ENCODE measurements at regions of chr15 and their contacts with region 1.

Region 1: DNA sequence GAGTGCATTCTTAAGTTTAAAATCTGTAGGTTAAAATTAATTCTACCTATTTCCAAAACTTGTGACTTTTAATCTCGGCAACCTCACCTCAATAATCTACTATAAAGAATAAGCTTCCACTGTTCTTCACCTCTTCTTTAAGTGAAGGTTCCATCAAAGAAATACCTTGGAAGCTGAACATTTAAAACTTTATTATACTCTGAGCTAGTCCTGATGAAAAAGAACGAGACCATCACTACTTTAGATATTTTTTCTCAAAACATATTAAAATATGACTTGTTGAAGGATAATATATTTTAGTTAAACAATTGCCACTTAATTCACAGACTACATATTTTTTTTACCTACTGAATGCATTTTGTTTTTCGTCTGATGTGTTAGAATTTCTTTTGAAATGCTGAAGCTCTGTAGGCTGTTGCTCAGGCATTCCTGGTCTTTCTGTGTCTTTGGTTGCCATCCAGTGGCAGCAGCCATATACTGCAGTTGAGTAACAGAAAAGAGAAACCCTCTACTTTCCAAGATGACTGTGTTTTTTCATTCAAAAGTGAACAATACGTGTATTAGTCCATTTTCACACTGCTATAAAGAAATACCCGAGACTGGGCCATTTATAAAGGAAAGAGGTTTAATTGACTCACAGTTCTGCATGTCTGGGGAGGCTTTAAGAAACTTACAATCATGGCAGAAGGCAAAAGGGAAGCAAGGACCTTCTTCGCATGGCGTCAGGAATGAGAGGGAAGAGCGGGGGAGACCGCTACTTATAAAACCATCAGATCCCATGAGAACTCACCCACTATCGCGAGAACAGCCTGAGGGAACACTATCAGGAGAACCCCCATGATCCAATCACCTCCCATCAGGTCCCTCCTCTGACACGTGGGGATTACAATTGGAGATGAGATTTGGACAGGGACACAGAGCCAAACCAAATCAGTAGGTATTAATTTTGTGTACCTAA is 4.5 kb upstream of the GOLGA8B start:
- DNase-seq: peak in 1 of 2 experiments; percentile 44
- H3K4me3 ChIP-seq: no peak overlapping the region
- H3K27ac ChIP-seq: no peak overlapping the region
- H3K4me1 ChIP-seq: no peaks in the 10 kb centered on the region
- H3K27me3 ChIP-seq: no peaks in the 10 kb centered on the region
- CTCF ChIP-seq: peak; percentile 84

Region 2: GRCh38 chr15:33737687-33738601 is 850.1 kb before region 1 on chr15:
- CTCF ChIA-PET with region 1: no interaction called
- POLR2A ChIA-PET with region 1: no interaction called
- intact Hi-C with region 1: loop called (anchors 5 kb)
- DNase-seq: peak in 1 of 2 experiments; percentile 31
- H3K4me3 ChIP-seq: no peak overlapping the region
- H3K27ac ChIP-seq: no peak overlapping the region
- H3K4me1 ChIP-seq: no peaks in the 10 kb centered on the region
- H3K27me3 ChIP-seq: no peaks in the 10 kb centered on the region
- CTCF ChIP-seq: peak; percentile 84

Region 3: DNA sequence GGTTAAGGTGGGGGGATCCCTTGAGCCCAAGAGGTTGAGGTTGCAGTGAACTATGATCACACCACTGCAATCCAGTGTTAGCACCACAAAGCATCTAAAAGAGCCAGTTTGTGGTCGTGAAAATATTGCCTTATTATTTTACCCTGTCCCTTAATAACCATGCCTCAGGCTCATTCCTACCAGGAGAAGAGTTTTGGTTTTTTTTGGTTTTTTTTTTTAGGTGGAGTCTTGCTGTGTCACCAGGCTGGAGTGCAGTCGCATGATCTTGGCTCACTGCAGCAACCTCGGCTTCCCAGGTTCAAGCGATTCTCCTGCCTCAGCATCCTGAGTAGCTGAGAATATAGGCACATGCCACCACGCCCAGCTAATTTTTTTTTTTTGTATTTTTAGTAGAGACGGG is 531.1 kb before region 1 on chr15:
- CTCF ChIA-PET with region 1: interaction called, 7 read pairs
- POLR2A ChIA-PET with region 1: interaction called, 4 read pairs
- intact Hi-C with region 1: loop called (anchors 1 kb)
- DNase-seq: no peak
- H3K4me3 ChIP-seq: no peak overlapping the region
- H3K27ac ChIP-seq: no peak overlapping the region
- H3K4me1 ChIP-seq: no peaks in the 10 kb centered on the region
- H3K27me3 ChIP-seq: no peaks in the 10 kb centered on the region
- CTCF ChIP-seq: no peak

Region 4: GRCh38 chr15:34109797-34110663 is 478.0 kb before region 1 on chr15:
- CTCF ChIA-PET with region 1: interaction called, 7 read pairs
- POLR2A ChIA-PET with region 1: no interaction called
- intact Hi-C with region 1: loop called (anchors 1 kb)
- DNase-seq: peak in 1 of 2 experiments; percentile 13
- H3K4me3 ChIP-seq: no peak overlapping the region
- H3K27ac ChIP-seq: no peak overlapping the region
- H3K4me1 ChIP-seq: no peaks in the 10 kb centered on the region
- H3K27me3 ChIP-seq: no peaks in the 10 kb centered on the region
- CTCF ChIP-seq: peak; percentile 76

Region 5: DNA sequence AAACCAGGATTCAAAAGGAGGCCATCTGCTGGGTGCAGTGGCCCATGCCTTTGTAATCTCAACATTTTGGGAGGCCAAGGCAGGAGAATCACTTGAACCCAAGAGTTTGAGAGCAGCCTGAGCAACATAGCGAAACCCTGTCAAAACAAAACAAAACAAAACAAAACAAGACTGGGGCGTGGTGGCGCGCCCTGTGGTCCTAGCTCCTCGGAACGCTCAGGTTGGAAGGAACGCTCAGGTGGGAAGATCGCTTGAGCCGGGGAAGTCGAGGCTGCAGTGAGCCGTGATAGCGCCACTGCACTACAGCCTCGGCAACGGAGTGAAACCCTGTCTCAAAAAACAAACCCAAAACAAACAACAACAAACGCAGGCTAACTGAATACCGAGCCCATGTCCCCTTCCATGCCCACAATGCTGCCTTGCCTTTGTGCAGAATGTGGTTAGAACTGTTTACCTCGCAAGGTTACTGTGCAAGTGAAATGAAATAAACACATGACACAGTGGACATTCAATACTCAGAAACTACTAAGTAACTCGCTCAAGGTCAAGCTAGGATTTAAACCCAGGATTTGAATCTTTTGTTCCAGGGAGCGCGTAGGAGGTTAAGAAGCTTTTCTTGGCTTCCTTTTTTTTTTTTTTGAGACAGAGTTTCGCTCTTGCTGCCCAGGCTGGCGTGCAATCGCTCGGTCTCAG is 363.9 kb before region 1 on chr15:
- CTCF ChIA-PET with region 1: no interaction called
- POLR2A ChIA-PET with region 1: no interaction called
- intact Hi-C with region 1: loop called (anchors 5 kb)
- DNase-seq: peak in 1 of 2 experiments; percentile 1
- H3K4me3 ChIP-seq: peak overlapping the region; percentile 77
- H3K27ac ChIP-seq: peak overlapping the region; percentile 98
- H3K4me1 ChIP-seq: peaks cover 6% of the 10 kb centered on the region; the same call in 1 of the 2 replicates
- H3K27me3 ChIP-seq: no peaks in the 10 kb centered on the region
- CTCF ChIP-seq: no peak

Region 6: GRCh38 chr15:34342737-34343575 is 245.0 kb before region 1 on chr15 and contains the starts of genes NOP10 and NUTM1:
- CTCF ChIA-PET with region 1: no interaction called
- POLR2A ChIA-PET with region 1: interaction called, 19 read pairs
- intact Hi-C with region 1: no loop called
- DNase-seq: peak; percentile 79 to 86
- H3K4me3 ChIP-seq: peak within 1 kb of the TSS; percentile 83
- H3K27ac ChIP-seq: peak within 1 kb of the TSS; percentile 81
- H3K4me1 ChIP-seq: peaks cover 11% of the 10 kb centered on the region; the same call in 1 of the 2 replicates
- H3K27me3 ChIP-seq: no peaks in the 10 kb centered on the region
- CTCF ChIP-seq: peak; percentile 93
- total RNA-seq, gene NOP10: 109 and 162 TPM in 2 replicates
- total RNA-seq, gene NUTM1: not detected in 2 replicates

Region 7: DNA sequence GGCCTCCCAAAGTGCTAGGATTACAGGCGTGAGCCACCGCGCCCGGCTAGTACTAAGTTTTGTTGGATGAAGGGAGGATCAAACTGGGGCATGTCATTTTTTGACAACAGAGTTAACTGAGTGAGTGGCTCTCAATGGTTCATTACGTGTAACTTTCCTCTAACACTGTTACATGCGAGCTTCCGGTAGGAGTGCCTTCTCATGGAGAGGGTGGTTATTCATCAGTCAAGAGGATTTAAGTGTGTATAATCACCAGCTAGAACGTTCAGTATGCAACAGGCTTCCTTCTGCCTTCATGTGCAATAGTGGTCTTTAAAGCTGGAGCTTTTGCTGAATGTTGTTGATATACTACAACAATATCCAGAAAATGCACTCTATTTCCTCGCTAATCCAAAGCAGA is 131.3 kb before region 1 on chr15:
- CTCF ChIA-PET with region 1: no interaction called
- POLR2A ChIA-PET with region 1: no interaction called
- intact Hi-C with region 1: no loop called
- DNase-seq: no peak
- H3K4me3 ChIP-seq: no peak overlapping the region
- H3K27ac ChIP-seq: no peak overlapping the region
- H3K4me1 ChIP-seq: no peaks in the 10 kb centered on the region
- H3K27me3 ChIP-seq: no peaks in the 10 kb centered on the region
- CTCF ChIP-seq: no peak

Region 8: DNA sequence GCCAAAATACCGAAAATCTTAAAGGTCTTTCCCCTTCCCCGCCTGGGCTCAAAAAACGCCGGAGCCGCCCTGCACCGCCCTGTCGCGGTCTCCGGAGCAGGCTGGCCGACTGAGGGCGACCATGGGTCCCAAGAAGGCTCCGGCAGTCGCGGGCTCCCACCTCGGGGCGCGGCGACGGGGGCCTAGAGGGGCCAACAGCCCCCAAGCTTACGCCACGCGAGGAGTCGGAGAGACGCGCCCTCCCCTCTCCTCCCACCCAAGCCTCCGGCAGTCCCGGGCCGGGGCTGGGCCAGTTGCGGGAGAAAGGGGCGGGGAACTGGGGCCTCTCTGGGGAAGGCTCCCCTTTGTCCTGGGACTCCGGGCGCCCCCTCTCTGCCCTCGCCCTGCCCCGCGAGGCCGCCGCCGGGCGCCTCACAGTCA is 73.7 kb before region 1 on chr15:
- CTCF ChIA-PET with region 1: no interaction called
- POLR2A ChIA-PET with region 1: no interaction called
- intact Hi-C with region 1: no loop called
- DNase-seq: peak in 1 of 2 experiments; percentile 34
- H3K4me3 ChIP-seq: peak overlapping the region; percentile 64
- H3K27ac ChIP-seq: no peak overlapping the region
- H3K4me1 ChIP-seq: no peaks in the 10 kb centered on the region
- H3K27me3 ChIP-seq: peaks cover 15% of the 10 kb centered on the region; the same call in 1 of the 2 replicates
- CTCF ChIP-seq: no peak

Region 9: DNA sequence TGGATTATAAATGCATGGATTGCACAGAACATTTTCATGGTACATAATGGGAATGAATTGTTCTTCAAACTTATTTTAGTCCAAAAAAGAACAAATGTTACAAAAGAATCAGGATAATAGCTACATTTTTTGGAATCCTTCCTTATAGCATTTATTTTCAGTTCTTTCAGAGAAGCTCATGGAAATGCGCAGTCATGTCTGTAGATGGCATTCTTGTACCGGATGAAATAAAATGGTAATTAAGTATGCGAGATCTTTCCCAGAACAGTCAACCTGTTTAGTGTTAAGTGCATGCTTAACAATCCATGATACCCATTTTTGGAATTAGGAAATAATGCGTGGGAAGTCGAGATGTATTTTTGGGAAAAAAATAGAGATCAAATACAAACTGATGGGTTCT is 33.7 kb after region 1 on chr15:
- CTCF ChIA-PET with region 1: no interaction called
- POLR2A ChIA-PET with region 1: no interaction called
- intact Hi-C with region 1: no loop called
- DNase-seq: no peak
- H3K4me3 ChIP-seq: no peak overlapping the region
- H3K27ac ChIP-seq: no peak overlapping the region
- H3K4me1 ChIP-seq: no peaks in the 10 kb centered on the region
- H3K27me3 ChIP-seq: no peaks in the 10 kb centered on the region
- CTCF ChIP-seq: peak; percentile 34; the same call in 1 of the 2 replicates